Activated CD8-positive, alpha-beta memory T cell treated with anti-CD3 and anti-CD28 coated beads, Interleukin-2, amount 10 ng/mL, durations not matched to agents 7 days and 5 days (primary cell): ENCODE measurements at regions of chr14 and their contacts with region 1.

Region 1: DNA sequence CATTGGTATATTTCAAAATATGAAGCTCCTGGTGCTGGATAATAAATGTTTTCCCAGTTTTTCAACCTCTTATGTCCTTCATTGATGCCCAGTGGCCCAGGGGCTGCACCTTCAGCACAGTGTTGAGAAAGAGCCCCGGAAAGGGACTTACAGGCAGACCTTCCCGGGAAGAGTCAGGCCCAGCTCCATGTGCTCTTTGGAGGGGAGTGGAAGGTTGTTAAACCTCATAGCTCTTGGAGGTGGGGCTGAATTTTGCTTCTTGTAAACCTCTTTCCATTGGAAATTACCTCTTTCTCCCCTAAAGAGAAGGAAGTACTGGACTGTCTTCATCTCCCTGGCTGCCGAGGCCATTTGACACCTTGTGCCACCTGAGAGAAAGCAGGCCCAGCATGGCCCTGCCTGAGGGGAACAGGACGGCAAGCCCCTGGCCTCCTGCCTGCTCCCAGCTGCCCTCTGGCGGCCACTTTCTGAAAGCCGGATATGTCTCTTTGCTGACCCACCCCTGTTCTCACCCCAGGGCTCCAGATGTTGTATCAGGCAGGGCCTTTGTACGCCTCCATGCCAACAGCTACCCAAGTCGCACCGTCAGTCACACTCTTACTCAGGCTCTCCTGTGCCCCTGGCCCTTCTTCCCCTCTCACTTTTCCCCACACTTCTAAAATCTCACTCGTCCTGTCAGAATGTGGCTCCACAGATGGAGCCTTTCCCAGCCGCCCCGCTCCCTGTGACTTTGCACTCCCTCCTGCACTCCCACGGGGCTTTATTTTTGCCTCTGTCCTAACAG is 43.0 kb downstream of the EVL start:
- DNase-seq: peak; percentile 89
- ATAC-seq: peak; percentile 68
- H3K4me3 Mint-ChIP-seq: no peak overlapping the region
- H3K27ac Mint-ChIP-seq: peak overlapping the region; percentile 90
- H3K4me1 Mint-ChIP-seq: peaks cover 71% of the 10 kb centered on the region
- H3K27me3 Mint-ChIP-seq: no peaks in the 10 kb centered on the region

Region 2: DNA sequence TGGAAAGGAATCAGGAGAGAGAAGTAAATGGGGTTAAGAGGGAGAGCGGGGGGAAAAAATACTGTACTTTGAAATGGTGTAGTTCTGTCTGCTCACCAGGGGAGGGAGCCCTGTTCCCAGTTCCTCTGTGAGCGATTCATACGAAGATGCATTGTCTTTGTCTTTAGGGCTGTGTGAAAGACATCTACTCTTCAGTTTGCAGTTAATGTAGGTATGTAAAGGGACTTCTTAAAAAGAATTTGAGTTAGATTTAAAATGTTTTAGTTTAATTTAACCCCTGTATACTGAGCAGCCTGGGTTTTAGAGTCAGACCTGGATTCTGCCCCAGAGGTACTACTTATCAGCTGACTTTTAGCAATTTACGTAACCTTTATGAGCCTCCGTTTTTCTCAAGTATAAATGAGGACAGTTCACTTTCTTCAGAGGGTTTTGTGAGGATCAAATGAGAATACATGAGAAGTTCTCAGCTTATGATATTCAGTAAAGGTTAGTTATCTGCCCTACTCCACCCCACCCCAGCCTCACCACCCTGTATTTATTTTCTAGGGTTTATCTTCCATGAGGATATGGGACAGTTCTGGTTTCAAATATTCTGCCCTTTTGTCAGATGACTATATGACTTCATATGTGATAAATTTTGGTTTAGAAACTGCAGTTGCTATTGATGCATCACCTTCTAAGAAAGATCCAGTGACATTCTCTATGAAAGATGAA is 125.5 kb before region 1 on chr14:
- CTCF ChIA-PET with region 1: interaction called, 43 read pairs
- DNase-seq: peak; percentile 70
- ATAC-seq: peak; percentile 92
- H3K4me3 Mint-ChIP-seq: no peak overlapping the region
- H3K27ac Mint-ChIP-seq: no peak overlapping the region
- H3K4me1 Mint-ChIP-seq: peaks cover 18% of the 10 kb centered on the region
- H3K27me3 Mint-ChIP-seq: no peaks in the 10 kb centered on the region

Region 3: GRCh38 chr14:100056964-100057795 is 51.1 kb before region 1 on chr14:
- CTCF ChIA-PET with region 1: interaction called, 64 read pairs
- DNase-seq: no peak
- ATAC-seq: peak; percentile 69
- H3K4me3 Mint-ChIP-seq: no peak overlapping the region
- H3K27ac Mint-ChIP-seq: peak overlapping the region; percentile 76
- H3K4me1 Mint-ChIP-seq: peaks cover 60% of the 10 kb centered on the region
- H3K27me3 Mint-ChIP-seq: no peaks in the 10 kb centered on the region

Region 4: GRCh38 chr14:100078991-100079725 is 29.1 kb before region 1 on chr14:
- CTCF ChIA-PET with region 1: interaction called, 607 read pairs
- DNase-seq: peak; percentile 96
- ATAC-seq: peak; percentile 80
- H3K4me3 Mint-ChIP-seq: peak overlapping the region; percentile 76
- H3K27ac Mint-ChIP-seq: peak overlapping the region; percentile 89
- H3K4me1 Mint-ChIP-seq: peaks cover 96% of the 10 kb centered on the region
- H3K27me3 Mint-ChIP-seq: no peaks in the 10 kb centered on the region

Region 5: GRCh38 chr14:100093319-100093718 is 14.9 kb before region 1 on chr14:
- CTCF ChIA-PET with region 1: interaction called, 20 read pairs
- DNase-seq: no peak
- ATAC-seq: no peak
- H3K4me3 Mint-ChIP-seq: no peak overlapping the region
- H3K27ac Mint-ChIP-seq: no peak overlapping the region
- H3K4me1 Mint-ChIP-seq: peaks cover 84% of the 10 kb centered on the region
- H3K27me3 Mint-ChIP-seq: no peaks in the 10 kb centered on the region

Region 6: DNA sequence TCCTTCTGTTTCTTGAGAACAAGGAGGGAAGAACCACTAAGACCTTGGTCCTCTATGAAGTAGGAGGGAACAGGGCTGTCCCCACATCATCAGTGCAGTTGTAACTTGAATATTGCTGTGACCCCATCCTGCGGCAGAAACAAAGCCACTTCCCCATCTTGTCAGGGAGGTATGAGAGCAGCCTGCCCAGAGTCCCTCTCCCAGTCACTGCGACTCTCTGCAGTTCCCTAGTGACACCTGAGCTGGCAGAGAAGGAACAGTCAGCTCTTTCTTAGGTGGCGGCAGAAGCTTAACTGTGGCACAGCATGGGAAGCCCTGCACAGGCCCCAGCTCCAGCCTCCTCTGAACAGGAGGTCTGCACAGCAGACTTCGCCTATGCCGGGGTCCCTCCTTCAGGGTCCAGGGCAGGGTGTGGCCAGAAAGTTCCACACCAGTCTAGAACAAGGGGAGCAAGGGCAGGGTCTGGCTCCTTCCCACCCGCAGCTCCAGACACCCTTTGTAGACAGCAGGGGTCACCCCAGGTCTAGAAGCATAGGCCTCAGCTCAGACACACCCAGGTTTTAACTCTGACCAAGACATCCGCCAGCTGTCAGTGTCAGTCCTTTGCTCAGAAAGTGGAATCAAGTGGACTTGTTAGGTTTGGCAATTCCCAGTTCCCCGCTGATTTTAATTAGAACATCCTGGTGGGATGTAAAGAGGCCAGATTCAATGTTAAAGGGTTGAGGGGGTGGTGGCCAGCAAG is 14.4 kb after region 1 on chr14:
- CTCF ChIA-PET with region 1: interaction called, 20 read pairs
- DNase-seq: no peak
- ATAC-seq: no peak
- H3K4me3 Mint-ChIP-seq: no peak overlapping the region
- H3K27ac Mint-ChIP-seq: peak overlapping the region; percentile 38
- H3K4me1 Mint-ChIP-seq: peaks cover 3% of the 10 kb centered on the region
- H3K27me3 Mint-ChIP-seq: no peaks in the 10 kb centered on the region

Region 7: DNA sequence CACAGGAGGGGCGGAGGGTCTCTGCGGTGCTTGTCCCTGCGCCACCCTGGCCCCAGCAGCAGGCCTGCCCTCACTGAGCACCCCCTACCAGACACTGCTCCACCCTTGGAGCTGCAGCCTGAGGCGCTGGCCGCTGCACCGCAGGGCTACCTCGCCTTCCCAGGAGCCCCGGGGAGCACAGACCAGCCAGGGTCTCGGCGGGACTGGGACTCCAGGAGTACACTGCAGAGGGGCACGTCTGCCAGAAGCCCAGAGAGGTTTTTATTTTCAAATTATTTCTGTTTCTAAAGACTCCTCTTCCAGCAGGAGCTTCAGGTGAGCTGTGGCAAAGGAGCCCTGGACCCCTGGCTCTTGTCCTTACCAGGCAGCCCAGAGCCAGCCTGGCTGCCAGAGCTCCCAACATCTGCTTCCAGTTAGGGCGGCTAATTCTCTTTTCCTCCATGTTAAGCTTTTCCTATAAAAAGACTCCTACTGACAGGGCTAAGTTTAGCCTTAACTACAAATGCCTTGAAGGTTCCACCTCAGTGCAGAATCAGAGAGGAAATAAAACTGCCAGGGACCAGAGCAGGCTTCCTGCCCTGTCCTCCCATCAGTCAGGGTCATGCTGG is 24.8 kb after region 1 on chr14:
- CTCF ChIA-PET with region 1: no interaction called
- DNase-seq: no peak
- ATAC-seq: no peak
- H3K4me3 Mint-ChIP-seq: no peak overlapping the region
- H3K27ac Mint-ChIP-seq: no peak overlapping the region
- H3K4me1 Mint-ChIP-seq: no peaks in the 10 kb centered on the region
- H3K27me3 Mint-ChIP-seq: no peaks in the 10 kb centered on the region